ENCODE measurements at regions of chr9 and their contacts with region 1.

Region 1: GRCh38 chr9:107732781-107733522 is 243.4 kb upstream of the KLF4 start:
- DNase-seq: peak; percentile 73
- ATAC-seq: peak; percentile 38
- H3K4me3 ChIP-seq: peak overlapping the region; percentile 23; the same call in 1 of the 2 replicates
- H3K27ac ChIP-seq: peak overlapping the region; percentile 98
- H3K4me1 ChIP-seq: peaks cover 24% of the 10 kb centered on the region
- H3K27me3 ChIP-seq: no peaks in the 10 kb centered on the region
- CTCF ChIP-seq: no peak
- POLR2A ChIP-seq: no peak
- RAD21 ChIP-seq: no peak

Region 2: GRCh38 chr9:107548048-107548800 is 184.7 kb before region 1 on chr9:
- CTCF ChIA-PET with region 1: no interaction called
- POLR2A ChIA-PET with region 1: no interaction called
- dilution Hi-C with region 1: no loop called
- in situ Hi-C with region 1: no loop called
- intact Hi-C with region 1: loop called (anchors 5 kb)
- DNase-seq: peak; percentile 96
- ATAC-seq: peak; percentile 83
- H3K4me3 ChIP-seq: no peak overlapping the region
- H3K27ac ChIP-seq: peak overlapping the region; percentile 84
- H3K4me1 ChIP-seq: peaks cover 12% of the 10 kb centered on the region
- H3K27me3 ChIP-seq: no peaks in the 10 kb centered on the region
- CTCF ChIP-seq: no peak
- POLR2A ChIP-seq: no peak
- RAD21 ChIP-seq: 0 out of 2 replicates have a peak, but pooled peaks have one; percentile 7

Region 3: DNA sequence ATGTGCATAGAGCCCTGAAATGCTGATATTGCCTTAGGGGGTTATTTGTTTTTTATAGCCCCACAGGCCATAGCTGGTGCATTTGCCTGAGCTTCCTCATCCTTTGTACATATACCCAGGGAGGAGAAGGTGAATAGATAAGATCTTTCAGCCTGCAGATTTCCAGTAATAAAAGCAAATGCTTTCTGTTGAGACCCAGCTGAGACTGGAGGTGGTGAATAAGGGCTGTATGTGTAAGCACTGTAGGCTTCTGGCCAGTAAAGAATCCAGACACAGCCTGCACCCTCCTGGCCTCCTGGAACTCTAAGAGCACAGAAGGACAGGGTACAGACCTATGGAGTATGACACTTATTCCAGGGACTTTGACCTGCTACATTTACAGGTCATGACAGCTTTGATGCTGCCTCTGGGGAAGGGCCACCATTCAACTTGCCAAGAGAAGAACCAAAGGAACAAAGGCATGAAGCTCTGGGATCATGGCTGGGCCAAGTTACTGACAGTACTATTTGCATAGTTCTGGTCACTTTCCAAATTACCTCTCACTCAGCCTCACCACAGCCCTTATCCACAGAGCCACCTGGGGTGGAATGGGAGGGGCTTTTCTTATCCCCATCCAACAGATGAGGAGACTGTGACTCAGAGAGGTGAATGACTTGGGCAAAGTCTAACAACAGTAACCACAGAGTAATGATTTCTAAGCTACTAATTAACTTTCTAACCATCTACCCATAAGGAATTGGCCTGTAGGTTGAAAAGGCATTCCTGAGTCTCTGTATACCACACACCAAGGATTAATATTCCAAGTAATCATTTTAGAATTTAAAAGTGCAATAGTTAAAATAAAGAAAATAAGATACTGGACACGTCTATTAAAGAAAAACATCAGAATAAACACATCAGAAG is 361.1 kb after region 1 on chr9:
- CTCF ChIA-PET with region 1: no interaction called
- POLR2A ChIA-PET with region 1: no interaction called
- dilution Hi-C with region 1: no loop called
- in situ Hi-C with region 1: no loop called
- intact Hi-C with region 1: no loop called
- DNase-seq: no peak
- ATAC-seq: peak; percentile 32; the same call in 1 of the 2 replicates
- H3K4me3 ChIP-seq: no peak overlapping the region
- H3K27ac ChIP-seq: no peak overlapping the region
- H3K4me1 ChIP-seq: no peaks in the 10 kb centered on the region
- H3K27me3 ChIP-seq: no peaks in the 10 kb centered on the region; the same call in 1 of the 2 replicates
- CTCF ChIP-seq: no peak
- POLR2A ChIP-seq: no peak
- RAD21 ChIP-seq: no peak

Region 4: GRCh38 chr9:108551030-108551838 is 818.3 kb after region 1 on chr9:
- CTCF ChIA-PET with region 1: no interaction called
- POLR2A ChIA-PET with region 1: no interaction called
- dilution Hi-C with region 1: no loop called
- in situ Hi-C with region 1: loop called (anchors 25 kb)
- intact Hi-C with region 1: loop called (anchors 5 kb)
- DNase-seq: peak; percentile 96
- ATAC-seq: peak; percentile 94
- H3K4me3 ChIP-seq: no peak overlapping the region
- H3K27ac ChIP-seq: peak overlapping the region; percentile 89
- H3K4me1 ChIP-seq: peaks cover 16% of the 10 kb centered on the region
- H3K27me3 ChIP-seq: no peaks in the 10 kb centered on the region
- CTCF ChIP-seq: no peak
- POLR2A ChIP-seq: no peak
- RAD21 ChIP-seq: peak; percentile 24; the same call in 1 of the 2 replicates